Activated CD4-positive, alpha-beta memory T cell treated with anti-CD3 and anti-CD28 coated beads for 36 hours (primary cell): ENCODE measurements at regions of chr9 and their contacts with region 1.

Region 1: DNA sequence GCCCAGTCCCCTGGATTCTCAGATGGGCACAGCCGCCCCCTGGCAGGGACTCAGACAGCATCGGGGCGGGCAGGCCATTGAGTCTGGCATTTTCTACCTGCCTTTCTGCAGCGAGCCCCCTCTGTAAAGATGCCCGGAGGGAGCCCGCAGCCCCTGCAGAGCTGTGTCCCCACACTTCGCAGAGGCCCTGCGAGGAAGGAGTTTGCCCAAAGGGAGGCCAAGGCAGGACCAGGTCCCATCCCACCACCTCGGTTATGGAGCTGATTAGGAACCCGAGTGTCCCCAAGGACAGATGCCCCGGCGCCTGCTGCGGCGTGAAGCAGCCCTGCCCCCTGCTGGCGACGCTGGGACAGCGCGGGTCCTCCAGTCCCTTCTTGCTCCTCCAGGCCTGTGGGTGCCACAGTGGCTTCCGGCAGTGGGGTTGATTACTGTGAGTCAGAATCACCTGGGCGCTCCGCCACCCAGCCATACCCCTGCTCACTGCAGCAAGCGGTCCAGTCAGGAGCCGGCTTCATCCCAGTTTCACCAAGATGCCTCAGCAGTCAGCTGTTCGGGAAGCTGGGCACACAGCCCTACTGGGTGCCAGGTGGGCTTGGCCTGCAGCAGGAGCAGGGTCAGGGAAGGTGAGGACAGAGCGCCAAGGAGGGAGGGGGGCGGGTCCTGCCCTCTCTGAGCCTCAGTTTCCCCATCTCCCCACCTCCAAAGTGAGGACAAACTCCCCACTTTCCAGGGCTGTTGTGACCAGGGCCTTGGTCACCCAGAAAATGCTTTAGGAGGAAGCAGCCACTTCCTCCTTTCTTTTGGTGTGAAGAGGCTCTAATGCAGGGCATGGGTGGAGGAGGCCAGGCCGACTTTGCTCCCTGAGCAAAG is 117.1 kb downstream of the RXRA start:
- DNase-seq: peak; percentile 93
- H3K4me3 Mint-ChIP-seq: no peak overlapping the region
- H3K27ac Mint-ChIP-seq: no peak overlapping the region
- H3K4me1 Mint-ChIP-seq: peaks cover 10% of the 10 kb centered on the region
- H3K27me3 Mint-ChIP-seq: peaks cover 6% of the 10 kb centered on the region

Region 2: DNA sequence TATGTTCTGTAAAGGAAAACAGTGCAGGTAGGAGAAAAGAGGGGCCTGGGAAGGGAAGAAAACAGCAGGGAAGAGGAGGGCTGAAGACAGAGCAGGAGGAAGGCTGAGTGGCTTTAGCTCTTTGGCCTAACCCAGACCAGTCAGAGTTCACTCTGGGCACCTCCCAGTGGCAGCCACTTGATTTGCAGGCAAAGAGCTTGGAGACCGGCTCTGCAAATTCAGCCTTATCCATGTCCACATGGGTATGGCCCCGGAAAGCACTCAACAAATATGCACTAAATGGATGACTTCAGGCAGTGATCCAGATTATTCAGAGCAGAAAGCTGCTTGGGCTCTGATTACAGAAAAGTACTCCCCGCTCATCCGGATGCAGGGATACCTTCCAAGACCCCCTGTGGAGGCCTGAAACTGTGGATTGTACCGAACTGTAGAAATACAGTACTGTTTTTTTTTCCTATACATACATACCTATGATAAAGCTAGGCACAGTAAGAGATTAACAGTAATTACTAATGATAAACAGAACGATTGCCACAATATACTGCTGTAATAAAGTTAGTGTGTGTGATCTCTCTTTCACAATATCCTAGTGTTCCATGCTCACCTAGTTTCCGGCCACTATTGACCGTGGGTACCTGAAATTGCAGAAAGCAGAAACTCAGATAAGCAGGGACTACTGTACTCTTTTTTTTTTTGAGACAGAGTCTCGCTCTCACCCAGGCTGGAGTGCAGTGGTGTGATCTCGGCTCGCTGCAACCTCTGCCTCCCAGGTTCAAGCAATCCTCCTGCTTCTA is 274.4 kb before region 1 on chr9:
- CTCF ChIA-PET with region 1: interaction called, 60 read pairs
- POLR2A ChIA-PET with region 1: no interaction called
- intact Hi-C with region 1: loop called (anchors 1 kb)
- DNase-seq: no peak
- H3K4me3 Mint-ChIP-seq: no peak overlapping the region
- H3K27ac Mint-ChIP-seq: no peak overlapping the region
- H3K4me1 Mint-ChIP-seq: peaks cover 10% of the 10 kb centered on the region
- H3K27me3 Mint-ChIP-seq: no peaks in the 10 kb centered on the region

Region 3: DNA sequence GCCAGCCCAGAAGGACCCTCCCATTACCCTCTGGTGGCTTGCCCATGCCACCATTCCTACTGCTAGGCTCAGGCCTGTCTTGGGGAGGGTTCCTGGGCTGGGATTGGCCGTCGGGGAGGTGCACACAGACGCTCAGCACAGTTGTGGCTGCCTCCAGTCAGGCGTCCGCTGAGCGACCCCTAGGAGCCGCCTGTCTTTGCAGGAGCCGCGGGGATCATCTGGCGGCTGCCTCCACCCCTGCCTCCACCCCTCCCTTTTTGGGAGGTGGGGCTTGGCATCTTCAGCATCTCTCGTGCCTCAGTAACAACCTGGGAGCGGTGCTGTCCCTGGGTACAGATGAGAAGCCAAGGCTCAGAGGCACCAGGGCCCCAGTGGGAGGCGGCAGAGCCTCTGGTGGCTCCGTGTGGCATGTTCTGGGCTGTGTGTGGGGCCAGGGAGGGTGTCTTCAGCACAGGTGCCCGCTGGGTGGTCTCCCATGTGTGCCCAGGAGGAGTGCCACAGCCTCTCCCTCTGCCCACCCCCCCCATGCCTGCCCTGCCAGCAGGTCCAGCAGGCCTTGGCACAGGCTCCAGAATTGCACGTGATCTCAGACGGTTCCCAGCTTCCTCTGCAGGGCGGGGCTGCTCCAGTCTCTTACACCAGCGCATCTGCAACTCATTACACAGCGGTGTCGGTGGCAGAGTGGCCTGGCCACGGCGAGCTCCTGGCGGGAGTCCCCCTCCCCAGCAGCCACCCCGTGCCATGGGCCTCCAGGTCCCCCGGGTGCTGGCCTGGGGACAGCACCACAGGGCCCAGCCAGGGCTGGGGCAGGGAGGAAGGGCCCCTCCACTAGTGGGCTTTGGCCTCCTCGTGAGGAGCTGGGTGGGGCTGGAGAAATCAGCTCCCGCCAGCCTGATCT is 77.4 kb before region 1 on chr9:
- CTCF ChIA-PET with region 1: interaction called, 24 read pairs
- POLR2A ChIA-PET with region 1: no interaction called
- intact Hi-C with region 1: loop called (anchors 1 kb)
- DNase-seq: no peak
- H3K4me3 Mint-ChIP-seq: no peak overlapping the region
- H3K27ac Mint-ChIP-seq: no peak overlapping the region
- H3K4me1 Mint-ChIP-seq: no peaks in the 10 kb centered on the region
- H3K27me3 Mint-ChIP-seq: no peaks in the 10 kb centered on the region

Region 4: GRCh38 chr9:134381671-134382516 is 61.5 kb before region 1 on chr9:
- CTCF ChIA-PET with region 1: interaction called, 15 read pairs
- POLR2A ChIA-PET with region 1: no interaction called
- intact Hi-C with region 1: no loop called
- DNase-seq: peak; percentile 51
- H3K4me3 Mint-ChIP-seq: no peak overlapping the region
- H3K27ac Mint-ChIP-seq: no peak overlapping the region
- H3K4me1 Mint-ChIP-seq: peaks cover 22% of the 10 kb centered on the region
- H3K27me3 Mint-ChIP-seq: no peaks in the 10 kb centered on the region

Region 5: DNA sequence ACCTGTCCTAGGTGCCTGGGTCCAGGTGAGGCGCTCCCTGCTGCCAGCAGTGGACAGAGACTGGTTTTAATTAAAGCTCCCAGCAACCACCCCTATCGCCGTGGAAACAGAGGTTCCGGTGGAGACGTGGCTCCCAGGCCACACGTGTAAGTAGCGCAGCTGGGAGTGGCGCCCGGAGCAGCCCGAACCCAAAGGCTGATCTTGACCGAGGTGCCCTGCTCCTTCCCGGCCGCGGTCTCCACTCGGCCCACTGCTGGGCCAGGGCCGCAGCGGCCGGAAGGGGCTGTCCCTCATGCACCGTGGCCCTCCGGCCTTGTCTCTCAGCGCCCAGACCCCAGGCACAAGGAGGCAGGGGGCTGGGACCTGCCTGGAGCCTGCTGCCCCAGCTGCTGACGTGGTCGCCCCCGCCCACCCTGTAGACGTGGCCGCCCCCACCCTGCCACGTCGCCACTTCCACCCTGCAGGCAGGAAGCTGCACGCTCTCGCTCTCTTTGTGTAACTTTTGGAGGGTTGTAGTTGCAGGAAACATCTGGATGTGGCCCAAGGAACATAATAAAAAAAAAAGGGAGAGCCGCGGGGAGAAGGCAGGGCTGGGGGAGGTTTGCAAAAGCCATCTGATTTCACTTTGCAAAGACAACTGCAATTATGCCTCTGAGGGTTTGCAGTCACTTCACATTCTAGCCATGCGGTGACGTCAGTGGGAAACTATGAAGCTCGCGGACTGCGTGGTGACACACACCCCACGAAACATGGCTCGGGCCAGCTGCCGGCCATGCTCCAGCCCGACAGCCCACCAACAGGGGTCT is 12.7 kb after region 1 on chr9:
- CTCF ChIA-PET with region 1: interaction called, 10 read pairs
- POLR2A ChIA-PET with region 1: no interaction called
- intact Hi-C with region 1: no loop called
- DNase-seq: peak; percentile 82
- H3K4me3 Mint-ChIP-seq: peak overlapping the region; percentile 71
- H3K27ac Mint-ChIP-seq: peak overlapping the region; percentile 88
- H3K4me1 Mint-ChIP-seq: peaks cover 10% of the 10 kb centered on the region
- H3K27me3 Mint-ChIP-seq: no peaks in the 10 kb centered on the region